ENCODE measurements at regions of chr7 and their contacts with region 1.

Region 1: DNA sequence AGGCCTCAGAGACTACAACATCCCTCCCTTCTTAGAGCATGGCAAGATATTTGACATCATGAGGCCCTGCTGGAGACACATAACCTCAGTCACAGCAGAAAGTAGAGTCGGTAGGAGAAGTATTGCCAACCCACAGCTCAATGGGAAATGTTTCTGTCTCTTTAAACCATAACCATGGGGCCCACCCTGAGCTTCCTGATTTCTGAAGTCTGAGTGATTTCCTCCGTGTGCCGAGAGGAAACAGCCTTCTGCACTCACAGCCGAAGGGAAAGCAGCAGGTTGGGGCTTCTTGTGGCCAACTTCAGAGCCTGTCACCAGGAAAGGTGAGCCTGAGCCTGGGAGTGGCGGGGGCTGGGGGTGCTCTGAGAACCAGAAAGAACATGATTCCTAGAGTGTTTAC is at the start of gene GIMAP1:
- DNase-seq: peak; percentile 69
- H3K4me3 Mint-ChIP-seq: peak within 1 kb of the TSS; percentile 97
- H3K27ac Mint-ChIP-seq: peak within 1 kb of the TSS; percentile 79
- H3K4me1 Mint-ChIP-seq: peaks cover 62% of the 10 kb centered on the region
- H3K27me3 Mint-ChIP-seq: no peaks in the 10 kb centered on the region
- total RNA-seq, gene GIMAP1: 18.8 to 21.0 TPM

Region 2: GRCh38 chr7:150481186-150481920 is 235.0 kb before region 1 on chr7:
- CTCF ChIA-PET with region 1: no interaction called
- POLR2A ChIA-PET with region 1: interaction called, 11 read pairs
- DNase-seq: peak; percentile 70
- H3K4me3 Mint-ChIP-seq: peak overlapping the region; percentile 81
- H3K27ac Mint-ChIP-seq: peak overlapping the region; percentile 99
- H3K4me1 Mint-ChIP-seq: peaks cover 95% of the 10 kb centered on the region
- H3K27me3 Mint-ChIP-seq: no peaks in the 10 kb centered on the region

Region 3: DNA sequence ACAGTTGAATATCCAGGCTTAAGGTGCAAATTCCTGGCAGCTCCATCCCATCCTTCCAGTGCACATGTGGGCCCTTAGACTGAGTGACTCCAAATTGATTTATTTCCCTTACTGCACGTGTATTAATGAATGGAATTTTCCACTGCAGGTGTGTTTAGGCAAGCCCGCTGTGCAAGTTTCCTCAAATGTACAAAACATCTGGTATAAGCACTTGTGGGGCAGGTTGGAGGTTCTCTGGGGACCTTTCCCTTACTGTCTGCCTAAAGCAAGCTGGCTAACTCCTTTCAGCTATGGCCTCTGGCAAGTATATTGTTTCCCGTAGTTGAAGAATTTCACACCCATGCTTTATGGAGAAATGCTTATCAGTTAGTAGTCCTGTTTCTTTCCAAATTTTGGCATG is 58.8 kb before region 1 on chr7:
- CTCF ChIA-PET with region 1: no interaction called
- POLR2A ChIA-PET with region 1: no interaction called
- DNase-seq: no peak
- H3K4me3 Mint-ChIP-seq: no peak overlapping the region
- H3K27ac Mint-ChIP-seq: no peak overlapping the region
- H3K4me1 Mint-ChIP-seq: peaks cover 27% of the 10 kb centered on the region
- H3K27me3 Mint-ChIP-seq: no peaks in the 10 kb centered on the region

Region 4: DNA sequence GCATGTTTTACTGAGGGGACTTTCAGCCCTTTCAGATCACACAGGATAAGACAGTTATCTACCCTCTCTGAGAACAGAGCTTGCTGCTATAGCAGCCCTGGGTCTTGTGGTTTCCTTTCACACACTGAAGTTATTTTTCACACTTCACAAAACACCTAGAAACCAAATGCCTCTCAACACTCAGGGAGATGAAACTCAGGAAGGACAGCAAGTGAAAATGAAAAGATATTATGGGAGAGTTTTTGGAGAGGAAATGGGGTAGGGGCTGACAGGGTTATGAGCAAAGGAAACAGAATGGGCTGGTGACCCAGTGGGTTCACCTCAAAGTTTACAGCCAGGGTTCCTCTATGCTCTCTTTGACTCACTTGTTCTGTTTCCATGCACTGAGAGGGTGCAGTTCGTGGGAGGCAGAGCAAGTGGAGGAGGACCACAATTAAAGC is 47.9 kb before region 1 on chr7:
- CTCF ChIA-PET with region 1: interaction called, 9 read pairs
- POLR2A ChIA-PET with region 1: interaction called, 30 read pairs
- DNase-seq: peak; percentile 75
- H3K4me3 Mint-ChIP-seq: peak overlapping the region; percentile 41
- H3K27ac Mint-ChIP-seq: peak overlapping the region; percentile 95
- H3K4me1 Mint-ChIP-seq: peaks cover 84% of the 10 kb centered on the region
- H3K27me3 Mint-ChIP-seq: no peaks in the 10 kb centered on the region

Region 5: GRCh38 chr7:150703209-150703608 is 13.2 kb before region 1 on chr7:
- CTCF ChIA-PET with region 1: interaction called, 8 read pairs
- POLR2A ChIA-PET with region 1: interaction called, 19 read pairs
- DNase-seq: no peak
- H3K4me3 Mint-ChIP-seq: no peak overlapping the region
- H3K27ac Mint-ChIP-seq: no peak overlapping the region
- H3K4me1 Mint-ChIP-seq: peaks cover 15% of the 10 kb centered on the region
- H3K27me3 Mint-ChIP-seq: peaks cover 4% of the 10 kb centered on the region

Region 6: DNA sequence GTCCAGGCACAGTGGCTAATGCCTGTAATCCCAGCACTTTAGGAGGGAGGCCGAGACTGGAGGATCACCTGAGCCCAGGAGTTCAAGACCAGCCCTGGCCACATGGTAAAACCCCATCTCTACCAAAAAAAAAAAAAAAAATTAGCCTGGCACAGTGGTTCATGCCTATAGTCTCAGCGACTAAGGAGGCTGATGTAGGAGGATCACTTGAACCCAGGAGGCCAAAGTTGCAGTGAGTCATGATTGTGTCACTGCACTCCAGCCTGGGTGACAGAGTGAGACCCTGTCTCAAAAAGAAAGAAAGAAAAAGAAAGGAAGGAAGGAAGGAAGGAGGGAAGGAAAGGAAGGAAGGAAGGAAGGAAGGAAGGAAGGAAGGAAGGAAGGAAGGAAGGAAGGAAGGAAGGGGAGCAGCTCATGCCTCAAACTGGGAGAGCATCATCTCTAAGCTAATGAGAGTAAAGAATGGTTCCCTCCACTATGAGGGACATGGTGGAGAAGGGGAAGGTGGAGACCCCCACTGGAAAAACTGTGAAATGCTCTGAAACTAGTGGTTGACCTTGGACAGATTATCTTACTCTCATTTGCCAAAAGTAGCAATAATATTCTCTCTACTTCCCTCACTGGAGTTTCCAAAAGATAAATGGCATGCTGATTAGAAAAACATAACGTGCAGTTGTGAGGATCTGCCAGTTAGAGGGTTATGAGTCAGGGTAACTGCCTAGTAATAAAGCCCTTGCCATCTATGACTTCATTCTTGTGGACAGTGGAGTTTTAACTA is 37.6 kb after region 1 on chr7:
- CTCF ChIA-PET with region 1: interaction called, 25 read pairs
- POLR2A ChIA-PET with region 1: interaction called, 25 read pairs
- DNase-seq: no peak
- H3K4me3 Mint-ChIP-seq: no peak overlapping the region
- H3K27ac Mint-ChIP-seq: peak overlapping the region; percentile 94
- H3K4me1 Mint-ChIP-seq: peaks cover 55% of the 10 kb centered on the region
- H3K27me3 Mint-ChIP-seq: no peaks in the 10 kb centered on the region

Region 7: GRCh38 chr7:151076611-151077444 is 360.5 kb after region 1 on chr7:
- CTCF ChIA-PET with region 1: no interaction called
- POLR2A ChIA-PET with region 1: no interaction called
- DNase-seq: no peak
- H3K4me3 Mint-ChIP-seq: no peak overlapping the region
- H3K27ac Mint-ChIP-seq: no peak overlapping the region
- H3K4me1 Mint-ChIP-seq: peaks cover 20% of the 10 kb centered on the region
- H3K27me3 Mint-ChIP-seq: no peaks in the 10 kb centered on the region